ENCODE measurements at regions of chr1 and their contacts with region 1.

Region 1: DNA sequence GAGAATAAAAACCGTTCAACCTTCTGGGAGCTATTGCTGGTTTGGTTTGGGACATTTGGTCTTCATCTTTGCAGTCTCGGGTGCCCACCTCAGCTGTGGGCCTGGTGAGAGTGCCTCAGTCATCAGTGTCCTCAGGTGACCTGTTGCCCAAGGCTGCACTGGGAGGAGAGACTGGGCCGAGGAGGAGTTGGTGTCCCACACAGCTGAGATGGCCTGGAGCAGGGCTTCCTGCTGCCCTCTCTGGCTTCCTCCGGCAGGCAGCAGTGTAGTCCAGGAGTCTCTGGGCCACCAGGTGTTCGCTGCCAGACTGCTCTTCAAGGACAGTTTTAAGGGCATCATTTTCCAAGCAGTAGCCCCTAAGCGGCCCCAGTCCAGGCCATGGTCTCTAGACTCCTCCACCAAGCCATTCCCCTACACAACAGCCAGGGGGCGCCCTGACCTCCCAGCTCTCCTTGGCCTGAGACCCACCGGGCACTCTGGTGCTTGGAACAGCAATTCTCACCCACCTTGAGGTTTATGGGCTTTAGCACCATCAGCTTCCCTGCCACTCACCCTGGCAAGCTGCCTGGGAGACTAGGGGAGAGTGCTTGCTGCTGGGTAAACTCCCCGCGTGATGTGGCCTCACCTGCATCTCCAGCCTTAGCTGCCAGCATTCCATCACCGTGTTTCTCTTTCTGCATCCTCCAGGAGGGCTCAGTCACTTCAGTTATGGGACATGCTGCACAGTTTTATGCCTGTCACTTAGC is 9.1 kb upstream of the SYTL1 start:
- DNase-seq: peak; percentile 61
- ATAC-seq: peak; percentile 77
- H3K4me3 Mint-ChIP-seq: no peak overlapping the region
- H3K27ac Mint-ChIP-seq: peak overlapping the region; percentile 57
- H3K4me1 Mint-ChIP-seq: peaks cover 20% of the 10 kb centered on the region
- H3K27me3 Mint-ChIP-seq: no peaks in the 10 kb centered on the region

Region 2: DNA sequence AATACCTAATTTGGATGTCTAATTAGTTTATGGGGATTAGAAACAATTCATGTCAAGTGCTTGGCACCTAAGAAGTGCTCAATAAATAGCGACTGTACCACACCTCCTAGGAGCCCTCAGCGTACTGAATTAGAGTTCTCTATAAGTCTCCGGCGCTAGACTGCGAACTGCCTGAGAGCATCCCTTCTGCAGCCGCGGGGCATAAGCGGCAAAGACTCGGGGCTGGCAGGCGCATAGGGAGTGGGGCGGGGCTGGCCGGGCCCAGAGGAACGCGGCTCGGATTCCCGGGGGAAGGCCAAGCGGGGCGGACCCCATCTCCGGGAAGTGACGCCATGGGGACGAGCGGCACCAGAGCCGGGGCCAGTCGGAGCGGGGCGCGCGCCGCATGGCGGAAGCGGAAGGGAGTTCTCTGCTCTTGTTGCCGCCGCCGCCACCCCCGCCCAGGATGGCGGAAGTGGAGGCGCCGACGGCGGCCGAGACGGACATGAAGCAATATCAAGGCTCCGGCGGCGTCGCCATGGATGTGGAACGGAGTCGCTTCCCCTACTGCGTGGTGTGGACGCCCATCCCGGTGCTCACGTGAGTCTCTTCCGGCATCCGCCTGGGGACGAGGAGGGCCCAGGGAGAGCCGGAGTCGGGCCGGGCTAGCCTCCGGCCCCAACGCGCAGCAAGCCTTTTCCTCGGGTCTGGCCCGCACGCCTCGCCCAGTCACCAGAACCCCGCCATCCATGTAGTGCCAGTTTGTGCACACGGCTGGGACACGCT is 10.7 kb before region 1 on chr1 and contains the start of gene TMEM222:
- CTCF ChIA-PET with region 1: interaction called, 33 read pairs
- DNase-seq: peak; percentile 98
- ATAC-seq: peak; percentile 98
- H3K4me3 Mint-ChIP-seq: peak within 1 kb of the TSS; percentile 92
- H3K27ac Mint-ChIP-seq: peak within 1 kb of the TSS; percentile 96
- H3K4me1 Mint-ChIP-seq: peaks cover 43% of the 10 kb centered on the region
- H3K27me3 Mint-ChIP-seq: peaks cover 2% of the 10 kb centered on the region
- total RNA-seq, gene TMEM222: 31.0 to 44.2 TPM

Region 3: DNA sequence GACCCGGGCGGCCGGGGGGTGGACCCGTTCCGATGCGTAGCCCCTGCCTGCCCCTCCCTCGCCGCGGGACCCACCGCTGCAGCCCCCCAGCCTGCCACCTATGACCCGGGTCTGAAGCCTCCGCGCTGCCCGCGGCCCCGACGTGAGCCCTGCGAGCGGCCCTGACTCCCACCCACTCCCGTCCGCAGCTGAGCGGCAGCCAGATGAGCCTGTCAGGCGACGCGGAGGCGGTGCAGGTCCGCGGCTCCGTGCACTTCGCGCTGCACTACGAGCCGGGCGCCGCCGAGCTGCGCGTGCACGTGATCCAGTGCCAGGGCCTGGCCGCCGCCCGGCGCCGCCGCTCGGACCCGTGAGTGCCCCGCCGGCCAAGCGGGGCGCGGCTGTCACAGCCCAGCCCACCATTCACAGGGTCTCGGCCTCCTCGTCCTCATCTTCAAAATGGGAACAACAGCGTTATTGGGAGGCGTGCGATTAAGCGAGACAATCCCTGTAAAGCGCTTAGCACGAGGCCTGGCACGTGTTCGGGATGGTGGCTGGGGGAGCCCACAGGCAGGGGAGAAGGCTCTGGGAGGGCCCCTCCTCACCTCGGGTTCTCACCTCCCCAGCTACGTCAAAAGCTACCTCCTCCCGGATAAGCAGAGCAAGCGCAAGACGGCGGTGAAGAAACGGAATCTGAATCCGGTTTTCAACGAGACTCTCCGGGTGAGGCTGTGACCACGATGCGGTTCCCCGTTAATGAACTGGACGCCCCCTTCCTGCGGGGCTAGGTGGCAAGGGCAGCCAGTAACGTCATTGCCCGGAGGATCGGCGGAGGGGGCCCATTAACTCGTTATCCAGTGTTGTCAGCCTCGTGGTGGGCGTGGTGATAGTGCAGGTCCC is 17.3 kb after region 1 on chr1:
- CTCF ChIA-PET with region 1: interaction called, 73 read pairs
- DNase-seq: no peak
- ATAC-seq: no peak
- H3K4me3 Mint-ChIP-seq: no peak overlapping the region
- H3K27ac Mint-ChIP-seq: no peak overlapping the region
- H3K4me1 Mint-ChIP-seq: peaks cover 5% of the 10 kb centered on the region
- H3K27me3 Mint-ChIP-seq: no peaks in the 10 kb centered on the region

Region 4: GRCh38 chr1:27357281-27358037 is 24.8 kb after region 1 on chr1:
- CTCF ChIA-PET with region 1: interaction called, 73 read pairs
- DNase-seq: peak; percentile 87
- ATAC-seq: peak; percentile 76
- H3K4me3 Mint-ChIP-seq: peak overlapping the region; percentile 73
- H3K27ac Mint-ChIP-seq: peak overlapping the region; percentile 93
- H3K4me1 Mint-ChIP-seq: peaks cover 44% of the 10 kb centered on the region
- H3K27me3 Mint-ChIP-seq: peaks cover 8% of the 10 kb centered on the region

Region 5: DNA sequence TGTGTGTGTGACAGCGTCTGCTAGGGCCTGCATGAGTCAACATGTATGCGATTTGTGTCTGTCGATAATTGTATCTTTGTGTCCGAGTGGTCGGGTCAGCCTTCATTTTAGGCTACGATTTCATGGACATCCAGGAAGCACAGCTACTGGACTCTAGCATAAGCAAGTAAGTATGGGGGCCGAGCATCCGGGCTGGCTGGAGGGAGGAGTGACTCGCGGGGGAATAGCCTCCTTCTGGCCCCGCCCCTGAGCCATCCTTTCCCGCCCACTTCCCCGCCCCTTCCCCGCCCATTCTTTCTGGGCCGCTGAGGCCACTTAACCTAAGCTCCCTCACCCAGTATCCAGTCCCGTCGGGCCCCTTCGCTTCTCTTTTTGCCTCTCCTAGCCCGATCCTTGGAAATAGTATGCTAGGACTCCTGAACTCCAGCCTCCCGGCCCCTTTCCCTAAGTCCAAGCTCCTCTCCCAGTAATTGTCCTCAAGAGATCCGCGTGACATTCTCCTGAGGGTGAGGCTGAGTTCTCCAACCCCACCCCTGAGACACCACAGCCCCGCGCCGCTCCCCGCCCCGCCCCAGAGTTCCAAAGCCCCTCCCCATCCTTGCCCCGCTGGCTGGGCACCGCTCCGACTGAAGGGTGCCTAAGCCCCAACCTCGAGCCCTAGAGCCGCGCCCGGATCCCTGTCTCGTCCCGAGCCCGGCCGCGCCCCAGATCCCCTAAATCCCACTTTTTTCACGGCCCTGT is 32.8 kb after region 1 on chr1:
- CTCF ChIA-PET with region 1: interaction called, 73 read pairs
- DNase-seq: peak; percentile 89
- ATAC-seq: peak; percentile 69
- H3K4me3 Mint-ChIP-seq: peak overlapping the region; percentile 78
- H3K27ac Mint-ChIP-seq: peak overlapping the region; percentile 79
- H3K4me1 Mint-ChIP-seq: peaks cover 27% of the 10 kb centered on the region
- H3K27me3 Mint-ChIP-seq: peaks cover 7% of the 10 kb centered on the region

Region 6: GRCh38 chr1:27383039-27383605 is 50.4 kb after region 1 on chr1 and contains the start of gene CD164L2:
- CTCF ChIA-PET with region 1: interaction called, 26 read pairs
- DNase-seq: no peak
- ATAC-seq: peak; percentile 68
- H3K4me3 Mint-ChIP-seq: no peak within 1 kb of the TSS
- H3K27ac Mint-ChIP-seq: no peak within 1 kb of the TSS
- H3K4me1 Mint-ChIP-seq: no peaks in the 10 kb centered on the region
- H3K27me3 Mint-ChIP-seq: peaks cover 8% of the 10 kb centered on the region
- total RNA-seq, gene CD164L2: not detected

Measured in activated CD8-positive, alpha-beta memory T cell treated with anti-CD3 and anti-CD28 coated beads, Interleukin-2, amount 10 ng/mL, durations not matched to agents 7 days and 5 days (primary cell).